H1 (cell line): ENCODE measurements at regions of chr9 and their contacts with region 1.

Region 1: DNA sequence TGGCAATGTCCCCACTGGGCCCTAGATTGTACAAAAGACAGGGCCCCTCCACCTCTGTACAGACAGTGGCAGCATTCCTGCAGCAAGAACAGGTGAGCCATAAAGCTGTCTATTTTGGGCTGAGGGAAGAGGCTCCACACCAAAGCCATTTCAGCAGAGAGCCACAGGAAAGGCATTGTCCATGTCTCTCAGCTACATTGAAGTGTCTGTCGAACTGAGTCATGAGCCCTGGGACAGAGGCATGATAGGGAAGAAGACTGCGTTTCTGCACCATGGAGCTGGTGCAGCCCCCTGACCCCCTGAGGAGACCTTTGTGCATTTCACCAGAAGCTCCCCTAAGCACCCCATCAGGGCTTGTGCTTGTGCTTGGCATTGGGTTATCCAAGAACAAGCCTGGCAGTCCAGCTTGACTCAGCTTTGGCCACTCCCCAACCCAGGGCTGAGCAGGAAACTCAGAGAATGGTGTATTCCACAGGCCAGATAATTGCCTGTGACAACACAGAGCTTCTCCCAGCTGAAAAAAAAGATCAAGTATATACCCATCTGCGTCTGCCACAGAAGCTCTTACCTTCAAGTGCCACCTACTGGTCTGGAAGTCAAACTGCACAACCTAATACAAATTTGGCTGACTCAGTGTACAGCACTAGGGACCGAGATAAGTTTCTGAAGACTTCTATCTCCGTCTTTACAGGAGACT is 5.9 kb upstream of the FRMD3 start:
- DNase-seq: no peak
- H3K4me3 ChIP-seq: no peak overlapping the region
- H3K27ac ChIP-seq: no peak overlapping the region
- H3K4me1 ChIP-seq: no peaks in the 10 kb centered on the region
- H3K27me3 ChIP-seq: peaks cover 6 to 21% (median 16%) of the 10 kb centered on the region in 4 experiments
- CTCF ChIP-seq: peak in 2 of 3 experiments; percentile 79 to 82; a peak in 3 of 4 replicates
- EP300 ChIP-seq: no peak
- POLR2A ChIP-seq: no peak
- RAD21 ChIP-seq: peak; percentile 86 to 91

Region 2: GRCh38 chr9:83339435-83339834 is 204.7 kb before region 1 on chr9:
- CTCF ChIA-PET with region 1: interaction called, 262 read pairs
- POLR2A ChIA-PET with region 1: no interaction called
- DNase-seq: no peak
- H3K4me3 ChIP-seq: no peak overlapping the region
- H3K27ac ChIP-seq: no peak overlapping the region
- H3K4me1 ChIP-seq: peaks cover 0 to 2% (median 0%) of the 10 kb centered on the region in 4 experiments; a peak in 2 of 7 replicates
- H3K27me3 ChIP-seq: no peaks in the 10 kb centered on the region
- CTCF ChIP-seq: no peak
- EP300 ChIP-seq: no peak
- POLR2A ChIP-seq: no peak
- RAD21 ChIP-seq: no peak

Region 3: DNA sequence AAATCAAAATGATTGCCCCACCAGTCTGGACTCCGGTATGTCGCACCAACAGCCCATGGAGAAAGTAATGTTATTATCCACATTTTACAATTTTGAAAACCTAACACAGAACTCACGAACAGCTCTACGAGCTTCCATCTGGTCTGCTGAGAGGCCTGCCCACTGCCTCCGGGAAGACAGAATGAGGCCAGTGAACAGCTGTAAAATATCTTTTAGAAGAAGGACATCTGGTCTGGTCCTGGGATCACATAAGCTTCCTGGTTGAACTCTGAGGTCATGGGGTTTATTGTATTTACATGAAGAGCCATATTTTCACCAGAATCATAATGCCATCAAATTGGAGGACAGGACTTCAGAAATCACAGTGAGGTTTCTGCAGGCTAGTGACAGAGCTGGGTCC is 95.0 kb before region 1 on chr9:
- CTCF ChIA-PET with region 1: interaction called, 10 read pairs
- POLR2A ChIA-PET with region 1: no interaction called
- DNase-seq: no peak
- H3K4me3 ChIP-seq: no peak overlapping the region
- H3K27ac ChIP-seq: no peak overlapping the region
- H3K4me1 ChIP-seq: no peaks in the 10 kb centered on the region
- H3K27me3 ChIP-seq: no peaks in the 10 kb centered on the region
- CTCF ChIP-seq: no peak
- EP300 ChIP-seq: no peak
- POLR2A ChIP-seq: no peak
- RAD21 ChIP-seq: no peak

Region 4: DNA sequence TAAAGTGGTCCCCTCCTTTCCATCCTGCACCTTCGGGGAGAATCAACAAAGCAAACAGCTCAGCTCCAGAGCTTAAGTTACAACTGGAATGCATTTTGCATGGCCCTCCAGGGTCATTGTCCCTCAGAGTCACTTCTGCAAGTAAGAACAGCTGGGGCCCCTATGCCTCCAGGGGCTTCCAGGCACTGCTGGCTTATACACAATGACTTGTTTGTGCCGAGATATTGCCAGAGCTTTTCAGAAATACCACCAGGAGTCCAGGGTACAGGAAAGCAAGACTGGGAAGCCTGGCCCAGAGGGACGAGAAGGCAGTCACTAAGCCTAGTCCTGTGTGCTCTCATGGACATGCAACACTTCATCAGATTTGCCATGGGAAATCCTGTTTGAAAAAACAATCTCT is 17.2 kb before region 1 on chr9:
- CTCF ChIA-PET with region 1: interaction called, 27 read pairs
- POLR2A ChIA-PET with region 1: no interaction called
- DNase-seq: no peak
- H3K4me3 ChIP-seq: no peak overlapping the region
- H3K27ac ChIP-seq: no peak overlapping the region
- H3K4me1 ChIP-seq: peaks cover 0 to 4% (median 0%) of the 10 kb centered on the region in 4 experiments; a peak in 1 of 7 replicates
- H3K27me3 ChIP-seq: no peaks in the 10 kb centered on the region
- CTCF ChIP-seq: no peak
- EP300 ChIP-seq: no peak
- POLR2A ChIP-seq: no peak
- RAD21 ChIP-seq: no peak

Region 5: DNA sequence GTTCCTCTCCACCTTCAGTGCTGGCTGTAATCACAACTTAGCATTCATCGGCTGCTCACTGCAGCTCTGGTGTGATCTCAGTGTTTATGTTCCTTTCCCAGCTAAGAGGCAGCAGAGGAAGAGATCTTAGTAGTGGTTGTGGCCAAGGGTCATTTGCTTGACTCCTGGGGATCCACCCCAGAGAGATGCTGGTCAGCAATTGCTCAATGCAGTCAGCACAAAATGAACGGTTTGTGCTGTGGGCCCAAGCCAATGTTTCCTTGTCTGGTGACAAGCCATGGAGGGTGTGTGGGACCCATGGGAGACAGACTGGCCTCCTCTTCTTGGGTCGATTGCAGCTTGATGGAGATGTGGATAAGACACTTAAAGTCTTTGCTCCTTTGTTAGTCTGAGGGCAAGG is 10.1 kb after region 1 on chr9:
- CTCF ChIA-PET with region 1: interaction called, 42 read pairs
- POLR2A ChIA-PET with region 1: no interaction called
- DNase-seq: no peak
- H3K4me3 ChIP-seq: no peak overlapping the region
- H3K27ac ChIP-seq: no peak overlapping the region
- H3K4me1 ChIP-seq: no peaks in the 10 kb centered on the region
- H3K27me3 ChIP-seq: no peaks in the 10 kb centered on the region
- CTCF ChIP-seq: no peak
- EP300 ChIP-seq: no peak
- POLR2A ChIP-seq: no peak
- RAD21 ChIP-seq: no peak

Region 6: DNA sequence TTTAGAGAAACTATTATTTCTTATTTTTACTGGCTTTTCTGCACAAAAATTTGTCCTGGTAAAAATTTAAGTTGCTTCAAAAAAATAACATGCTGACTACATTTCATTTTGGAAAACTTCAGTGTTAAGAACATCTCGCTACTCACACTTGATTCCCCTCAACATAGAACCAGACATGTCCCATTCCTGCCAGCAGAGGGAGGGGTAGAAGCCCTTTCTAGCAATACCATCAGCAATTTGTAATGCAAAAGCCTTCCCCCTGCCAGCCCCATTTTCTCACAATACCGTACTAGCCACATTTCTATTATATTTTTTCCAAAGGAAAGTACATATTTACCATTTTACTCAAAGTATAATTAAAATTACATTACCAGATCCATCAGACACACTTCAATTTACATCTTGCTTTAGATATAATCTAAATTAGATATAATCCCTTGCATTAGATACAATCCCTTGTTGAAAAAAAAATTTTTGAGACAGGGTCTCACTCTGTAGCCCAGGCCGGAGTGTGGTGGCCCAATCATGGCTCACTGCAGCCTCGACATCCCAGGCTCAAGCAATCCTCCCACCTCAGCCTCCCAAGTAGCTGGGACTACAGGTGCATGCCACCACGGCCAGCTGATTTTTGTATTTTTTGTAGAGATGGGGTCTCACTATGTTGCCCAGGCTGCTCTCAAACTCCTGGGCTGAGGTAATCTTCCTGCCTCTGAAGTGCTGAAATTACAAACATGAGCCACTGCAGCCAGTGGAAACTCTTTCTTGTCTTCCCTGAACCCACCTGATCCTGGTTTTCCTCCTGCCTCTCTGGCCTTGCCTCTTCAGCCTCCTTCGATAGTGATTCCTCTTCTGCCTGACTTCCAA is 39.2 kb after region 1 on chr9:
- CTCF ChIA-PET with region 1: interaction called, 11 read pairs
- POLR2A ChIA-PET with region 1: no interaction called
- DNase-seq: peak; percentile 47 to 80
- H3K4me3 ChIP-seq: no peak overlapping the region
- H3K27ac ChIP-seq: no peak overlapping the region
- H3K4me1 ChIP-seq: no peaks in the 10 kb centered on the region; a peak in 2 of 7 replicates
- H3K27me3 ChIP-seq: no peaks in the 10 kb centered on the region
- CTCF ChIP-seq: peak; percentile 22 to 85 (median 67)
- EP300 ChIP-seq: 0 out of 3 replicates have a peak, but pooled peaks of 1 of the 2 experiments have one; percentile 30
- POLR2A ChIP-seq: no peak
- RAD21 ChIP-seq: peak; percentile 59